Caco-2 (cell line): ENCODE measurements at regions of chr2 and their contacts with region 1.

Region 1: DNA sequence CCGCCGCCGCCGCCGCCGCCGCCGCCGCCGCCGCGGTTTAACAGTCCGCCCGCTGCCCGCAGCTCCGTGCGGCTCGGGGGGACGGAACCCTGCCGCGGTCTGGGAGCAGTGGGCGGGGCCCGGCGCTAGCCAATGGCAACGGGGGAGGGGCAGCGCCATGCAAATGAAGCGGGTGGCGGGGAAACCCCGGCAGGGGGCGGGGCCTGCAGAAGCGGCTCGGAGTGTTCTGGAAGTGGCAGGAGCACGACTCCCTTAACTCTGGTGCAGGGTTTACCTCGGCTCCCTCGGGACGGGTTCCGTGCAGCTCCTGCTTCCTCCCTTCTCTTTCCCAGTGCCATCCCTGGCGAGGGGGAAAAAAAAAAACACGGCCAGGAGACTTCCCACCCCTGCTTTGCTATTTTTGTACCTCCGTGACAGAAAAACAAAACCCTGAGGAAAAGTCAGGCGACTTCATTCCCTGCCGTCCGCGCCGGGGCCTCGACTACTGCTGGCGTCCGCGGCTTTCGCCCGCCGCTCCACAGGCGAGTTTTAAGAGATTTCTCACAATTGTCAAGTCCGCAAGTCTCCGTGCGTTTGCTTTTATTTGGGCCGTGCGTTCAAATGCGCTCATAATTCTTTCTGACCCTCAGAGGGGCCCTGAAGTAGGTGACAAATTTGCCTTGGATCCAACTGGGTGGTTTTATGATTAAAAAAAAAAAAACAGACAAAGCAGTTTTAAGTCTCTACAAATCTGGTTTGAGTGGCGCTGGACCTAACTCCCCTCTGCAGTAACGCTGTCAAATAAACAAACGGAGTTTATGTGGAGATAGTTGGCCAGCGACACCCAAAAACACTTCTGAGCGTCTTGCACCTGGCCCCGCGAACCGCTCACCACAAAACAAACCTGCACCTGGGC is at the start of gene KANSL1L:
- DNase-seq: peak; percentile 98 to 99
- H3K4me3 ChIP-seq: peak within 1 kb of the TSS; percentile 84
- H3K4me3 Mint-ChIP-seq: peak within 1 kb of the TSS; percentile 94
- H3K27ac Mint-ChIP-seq: peak within 1 kb of the TSS; percentile 93
- H3K4me1 ChIP-seq: 0 out of 2 replicates have a peak, but pooled peaks cover 7% of the 10 kb centered on the region
- H3K4me1 Mint-ChIP-seq: peaks cover 17% of the 10 kb centered on the region
- H3K27me3 ChIP-seq: no peaks in the 10 kb centered on the region
- H3K27me3 Mint-ChIP-seq: no peaks in the 10 kb centered on the region
- CTCF ChIP-seq: no peak
- total RNA-seq, gene KANSL1L: 5.3 and 5.7 TPM in 2 replicates

Region 2: GRCh38 chr2:208265801-208266552 is 1905.6 kb before region 1 on chr2 and contains the start of gene PIKFYVE:
- CTCF ChIA-PET with region 1: no interaction called
- POLR2A ChIA-PET with region 1: no interaction called
- intact Hi-C with region 1: loop called (anchors 5 kb)
- DNase-seq: peak; percentile 96 to 98
- H3K4me3 ChIP-seq: peak within 1 kb of the TSS; percentile 71
- H3K4me3 Mint-ChIP-seq: peak within 1 kb of the TSS; percentile 87
- H3K27ac Mint-ChIP-seq: peak within 1 kb of the TSS; percentile 94
- H3K4me1 ChIP-seq: peaks cover 10% of the 10 kb centered on the region; the same call in 1 of the 2 replicates
- H3K4me1 Mint-ChIP-seq: peaks cover 32% of the 10 kb centered on the region
- H3K27me3 ChIP-seq: no peaks in the 10 kb centered on the region
- H3K27me3 Mint-ChIP-seq: no peaks in the 10 kb centered on the region
- CTCF ChIP-seq: no peak
- total RNA-seq, gene PIKFYVE: 27.9 and 31.2 TPM in 2 replicates

Region 3: DNA sequence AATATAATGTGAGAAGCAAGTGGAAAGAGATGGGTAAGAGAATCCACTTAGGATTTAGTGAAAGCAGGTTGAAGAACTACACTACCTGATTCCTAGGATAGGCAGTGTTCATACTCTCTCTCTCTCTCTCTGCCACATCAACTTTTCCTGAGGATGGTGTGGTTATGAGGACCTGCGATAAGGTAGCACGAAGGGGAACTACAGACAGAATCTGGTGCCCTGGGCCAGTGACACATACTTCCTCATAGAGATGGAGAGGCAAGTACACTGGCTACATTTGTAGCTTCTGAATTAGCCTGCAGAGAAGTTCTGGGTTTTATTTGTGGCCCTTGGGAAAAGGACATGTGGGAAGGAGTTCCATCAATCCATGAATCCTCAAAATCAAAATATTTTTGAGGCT is 1720.5 kb before region 1 on chr2:
- CTCF ChIA-PET with region 1: no interaction called
- POLR2A ChIA-PET with region 1: no interaction called
- intact Hi-C with region 1: loop called (anchors 10 kb)
- DNase-seq: no peak
- H3K4me3 ChIP-seq: no peak overlapping the region
- H3K4me3 Mint-ChIP-seq: no peak overlapping the region
- H3K27ac Mint-ChIP-seq: no peak overlapping the region
- H3K4me1 ChIP-seq: no peaks in the 10 kb centered on the region
- H3K4me1 Mint-ChIP-seq: peaks cover 10% of the 10 kb centered on the region
- H3K27me3 ChIP-seq: 0 out of 2 replicates have a peak, but pooled peaks cover 1% of the 10 kb centered on the region
- H3K27me3 Mint-ChIP-seq: no peaks in the 10 kb centered on the region
- CTCF ChIP-seq: no peak

Region 4: GRCh38 chr2:210002158-210003157 is 169.1 kb before region 1 on chr2 and contains the start of gene RPE:
- CTCF ChIA-PET with region 1: no interaction called
- POLR2A ChIA-PET with region 1: no interaction called
- intact Hi-C with region 1: loop called (anchors 1 kb)
- DNase-seq: peak; percentile 96
- H3K4me3 ChIP-seq: peak within 1 kb of the TSS; percentile 75
- H3K4me3 Mint-ChIP-seq: peak within 1 kb of the TSS; percentile 78
- H3K27ac Mint-ChIP-seq: peak within 1 kb of the TSS; percentile 98
- H3K4me1 ChIP-seq: peaks cover 14% of the 10 kb centered on the region
- H3K4me1 Mint-ChIP-seq: peaks cover 25% of the 10 kb centered on the region
- H3K27me3 ChIP-seq: no peaks in the 10 kb centered on the region
- H3K27me3 Mint-ChIP-seq: no peaks in the 10 kb centered on the region
- CTCF ChIP-seq: no peak
- total RNA-seq, gene RPE: 91.1 and 92.9 TPM in 2 replicates

Region 5: GRCh38 chr2:210189452-210190143 is 18.0 kb after region 1 on chr2:
- CTCF ChIA-PET with region 1: no interaction called
- POLR2A ChIA-PET with region 1: no interaction called
- intact Hi-C with region 1: loop called (anchors 1 kb)
- DNase-seq: no peak
- H3K4me3 ChIP-seq: no peak overlapping the region
- H3K4me3 Mint-ChIP-seq: no peak overlapping the region
- H3K27ac Mint-ChIP-seq: no peak overlapping the region
- H3K4me1 ChIP-seq: peaks cover 19% of the 10 kb centered on the region
- H3K4me1 Mint-ChIP-seq: no peaks in the 10 kb centered on the region
- H3K27me3 ChIP-seq: no peaks in the 10 kb centered on the region
- H3K27me3 Mint-ChIP-seq: no peaks in the 10 kb centered on the region
- CTCF ChIP-seq: no peak

Region 6: GRCh38 chr2:210195101-210195852 is 23.7 kb after region 1 on chr2:
- CTCF ChIA-PET with region 1: no interaction called
- POLR2A ChIA-PET with region 1: no interaction called
- intact Hi-C with region 1: loop called (anchors 1 kb)
- DNase-seq: peak in 1 of 2 experiments; percentile 17
- H3K4me3 ChIP-seq: no peak overlapping the region
- H3K4me3 Mint-ChIP-seq: no peak overlapping the region
- H3K27ac Mint-ChIP-seq: no peak overlapping the region
- H3K4me1 ChIP-seq: peaks cover 3% of the 10 kb centered on the region
- H3K4me1 Mint-ChIP-seq: no peaks in the 10 kb centered on the region
- H3K27me3 ChIP-seq: no peaks in the 10 kb centered on the region
- H3K27me3 Mint-ChIP-seq: no peaks in the 10 kb centered on the region
- CTCF ChIP-seq: peak; percentile 61 to 66

Region 7: DNA sequence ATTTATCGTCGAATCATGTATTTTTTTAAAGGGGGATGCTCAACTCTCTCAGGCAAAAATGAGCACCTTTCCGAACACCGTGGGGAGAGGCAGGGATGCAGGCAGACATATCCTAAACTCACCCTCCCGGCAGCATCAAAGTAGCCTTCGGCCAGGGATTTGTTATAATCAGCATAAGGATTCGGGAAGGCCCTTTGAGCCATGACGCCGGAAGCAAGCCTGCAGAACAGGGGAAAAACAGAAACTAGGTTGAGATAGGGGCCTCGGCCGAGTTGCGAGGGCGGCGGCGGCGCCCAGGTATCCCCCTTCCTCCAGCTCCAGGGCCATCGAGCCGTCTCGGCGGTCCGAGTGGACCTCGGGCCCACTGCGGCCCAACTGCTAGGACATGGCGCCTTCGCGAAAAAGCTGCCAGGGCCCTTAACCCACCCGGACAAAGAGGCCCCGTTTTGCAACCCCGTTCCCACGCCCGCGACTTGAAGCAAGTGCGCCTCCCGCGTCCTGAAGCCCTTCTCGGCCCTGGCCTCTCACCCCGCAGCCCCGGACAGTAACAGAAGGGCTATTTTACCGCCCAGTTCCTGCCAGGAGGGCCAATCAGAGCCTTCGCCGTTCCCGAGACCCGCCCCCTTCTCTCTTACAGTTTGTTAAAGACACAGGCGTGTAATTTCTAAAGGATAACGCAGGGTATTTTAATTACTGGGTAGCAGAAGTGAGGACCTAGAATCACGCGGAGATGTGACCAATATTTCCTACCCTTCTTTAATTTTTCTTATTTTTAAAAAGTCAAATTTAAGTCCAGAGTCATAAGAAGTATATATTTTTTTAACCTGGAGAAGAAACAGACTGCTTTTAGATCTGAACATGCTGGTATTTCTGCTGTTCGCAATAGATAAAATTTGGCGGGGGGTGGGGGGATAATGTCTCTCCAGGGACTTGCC is 304.9 kb after region 1 on chr2 and contains the start of gene LANCL1:
- CTCF ChIA-PET with region 1: no interaction called
- POLR2A ChIA-PET with region 1: no interaction called
- intact Hi-C with region 1: loop called (anchors 1 kb)
- DNase-seq: peak; percentile 89
- H3K4me3 ChIP-seq: peak within 1 kb of the TSS; percentile 67
- H3K4me3 Mint-ChIP-seq: peak within 1 kb of the TSS; percentile 95
- H3K27ac Mint-ChIP-seq: peak within 1 kb of the TSS; percentile 86
- H3K4me1 ChIP-seq: no peaks in the 10 kb centered on the region; the same call in 1 of the 2 replicates
- H3K4me1 Mint-ChIP-seq: no peaks in the 10 kb centered on the region
- H3K27me3 ChIP-seq: no peaks in the 10 kb centered on the region
- H3K27me3 Mint-ChIP-seq: no peaks in the 10 kb centered on the region
- CTCF ChIP-seq: no peak
- total RNA-seq, gene LANCL1: 26.5 and 30.6 TPM in 2 replicates